ENCODE measurements at regions of chr16 and their contacts with region 1.

Region 1: GRCh38 chr16:56637814-56638750 is at the start of gene MT1A:
- DNase-seq: no peak
- H3K4me3 ChIP-seq: peak within 1 kb of the TSS; percentile 51 to 61 (median 56)
- H3K27ac ChIP-seq: peak within 1 kb of the TSS; percentile 48 to 70 (median 64)
- H3K4me1 ChIP-seq: peaks cover 18 to 50% (median 41%) of the 10 kb centered on the region in 4 donors
- H3K27me3 ChIP-seq: peaks cover 0 to 98% (median 20%) of the 10 kb centered on the region in 4 donors
- CTCF ChIP-seq: no peak
- EP300 ChIP-seq: peak; percentile 72
- POLR2A ChIP-seq: peak; percentile 48
- total RNA-seq, gene MT1A: 1.7 to 371 (median 21.3) TPM in 3 of 4 donors, not detected in the other

Region 2: GRCh38 chr16:56569801-56570370 is 68.2 kb before region 1 on chr16:
- intact Hi-C with region 1: no loop called
- DNase-seq: no peak
- H3K4me3 ChIP-seq: no peak overlapping the region
- H3K27ac ChIP-seq: no peak overlapping the region
- H3K4me1 ChIP-seq: no peaks in the 10 kb centered on the region
- H3K27me3 ChIP-seq: peaks cover 0 to 18% (median 0%) of the 10 kb centered on the region in 4 donors
- CTCF ChIP-seq: no peak
- EP300 ChIP-seq: no peak
- POLR2A ChIP-seq: no peak

Region 3: DNA sequence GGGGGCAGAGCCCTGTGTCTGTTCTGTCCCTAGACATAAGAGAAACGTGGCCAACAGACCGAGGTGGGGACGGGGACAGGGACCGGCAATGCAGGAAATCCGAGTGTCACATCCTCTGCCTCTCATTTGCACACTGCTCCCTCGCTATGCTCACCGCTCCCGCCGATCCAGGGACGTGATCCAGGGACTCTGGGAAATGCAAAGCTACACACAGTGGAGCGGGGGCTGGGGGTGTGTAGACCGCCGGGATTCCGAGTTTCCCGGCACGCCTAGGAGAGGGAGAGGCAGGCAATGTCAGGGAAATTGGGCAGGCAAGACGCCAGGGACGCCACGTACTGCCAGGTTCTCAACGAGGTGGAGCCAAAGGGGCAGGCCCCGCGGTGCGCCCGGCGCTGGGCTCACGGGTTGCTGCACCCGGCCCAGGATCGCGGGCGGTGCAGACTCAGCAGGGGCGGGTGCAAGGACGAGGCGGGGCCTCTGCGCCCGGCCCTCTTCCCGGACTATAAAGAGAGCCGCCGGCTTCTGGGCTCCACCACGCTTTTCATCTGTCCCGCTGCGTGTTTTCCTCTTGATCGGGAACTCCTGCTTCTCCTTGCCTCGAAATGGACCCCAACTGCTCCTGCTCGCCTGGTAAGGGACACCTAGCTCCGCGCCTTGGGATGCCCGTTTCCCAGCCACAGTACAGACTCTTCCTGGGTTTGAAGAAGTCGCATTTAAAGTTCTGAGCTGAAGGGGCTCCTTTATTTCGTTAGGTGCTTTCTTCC is 44.0 kb after region 1 on chr16 and contains the start of gene MT1X:
- intact Hi-C with region 1: loop called (anchors 5 kb)
- DNase-seq: peak; percentile 98
- H3K4me3 ChIP-seq: peak within 1 kb of the TSS; percentile 51 to 68 (median 62)
- H3K27ac ChIP-seq: peak within 1 kb of the TSS; percentile 67 to 86 (median 84)
- H3K4me1 ChIP-seq: peaks cover 35 to 50% (median 42%) of the 10 kb centered on the region in 4 donors
- H3K27me3 ChIP-seq: peaks cover 0 to 3% (median 0%) of the 10 kb centered on the region in 4 donors
- CTCF ChIP-seq: no peak
- EP300 ChIP-seq: peak; percentile 98
- POLR2A ChIP-seq: peak; percentile 99
- total RNA-seq, gene MT1X: 283 to 1,221 (median 512) TPM